ENCODE measurements at regions of chr4 and their contacts with region 1.

Region 1: DNA sequence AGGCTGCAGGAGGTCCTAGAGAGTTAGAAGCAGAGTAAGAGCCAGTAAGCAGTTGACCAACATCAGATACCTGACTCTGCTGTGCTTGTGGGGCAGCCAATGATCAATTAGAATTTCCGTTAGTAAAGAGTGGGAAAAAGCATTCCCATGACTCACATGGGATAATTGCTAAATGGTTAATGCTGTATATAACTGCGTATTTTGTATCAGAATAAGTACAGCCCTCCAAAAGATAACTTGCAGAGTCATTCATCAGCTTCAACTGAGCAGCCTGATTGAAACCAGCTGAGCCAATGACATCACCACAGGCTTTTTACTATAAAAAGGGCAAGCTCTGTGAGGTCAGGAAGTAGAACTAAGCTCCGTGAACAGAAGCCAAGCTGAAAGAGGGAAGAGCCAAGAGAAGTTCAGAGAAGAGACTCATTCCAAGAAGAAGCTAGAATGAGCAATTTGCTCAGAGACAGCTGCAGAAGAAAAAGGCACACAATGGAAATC is 67.9 kb downstream of the PPP3CA start:
- DNase-seq: no peak
- CTCF ChIP-seq: no peak

Region 2: DNA sequence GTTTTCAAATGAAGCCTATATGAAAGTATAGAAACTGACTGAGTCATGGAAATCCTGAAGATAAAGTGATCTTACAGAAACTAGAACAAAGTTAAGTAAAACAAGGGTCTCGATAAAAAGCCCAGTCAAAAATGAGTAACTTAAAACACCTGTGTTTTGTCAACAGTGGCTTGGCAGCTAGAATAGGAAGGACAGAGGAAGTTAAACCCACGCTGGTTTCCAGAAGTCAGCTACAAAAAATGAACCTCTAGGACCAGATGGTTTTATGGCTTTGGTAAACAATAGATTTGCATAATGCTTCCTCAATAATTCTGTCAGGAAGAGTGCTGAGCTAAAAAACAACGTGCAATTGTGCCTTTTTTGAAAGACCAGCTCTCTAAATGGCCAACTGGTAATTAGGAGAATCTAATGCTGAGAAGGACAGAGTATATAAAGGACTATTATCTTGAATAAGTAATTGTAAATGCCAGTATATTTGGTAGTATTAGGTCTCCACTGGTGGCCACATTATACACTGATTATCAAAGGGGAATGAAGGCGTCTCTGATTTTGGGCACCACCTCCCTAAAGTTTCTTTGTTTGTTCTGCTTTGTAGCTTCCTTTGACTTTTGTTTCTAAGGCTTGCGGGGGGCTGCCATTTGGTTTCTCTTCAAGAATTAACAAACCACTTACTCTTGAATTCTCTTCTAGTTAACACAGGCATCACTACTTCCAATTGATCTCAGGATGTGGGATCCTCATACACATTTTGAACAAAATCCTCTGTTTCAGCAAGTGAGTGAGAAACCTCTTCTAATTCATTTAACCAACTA is 140.1 kb after region 1 on chr4:
- in situ Hi-C with region 1: loop called (anchors 10 kb)
- DNase-seq: peak; percentile 31
- CTCF ChIP-seq: no peak

Region 3: DNA sequence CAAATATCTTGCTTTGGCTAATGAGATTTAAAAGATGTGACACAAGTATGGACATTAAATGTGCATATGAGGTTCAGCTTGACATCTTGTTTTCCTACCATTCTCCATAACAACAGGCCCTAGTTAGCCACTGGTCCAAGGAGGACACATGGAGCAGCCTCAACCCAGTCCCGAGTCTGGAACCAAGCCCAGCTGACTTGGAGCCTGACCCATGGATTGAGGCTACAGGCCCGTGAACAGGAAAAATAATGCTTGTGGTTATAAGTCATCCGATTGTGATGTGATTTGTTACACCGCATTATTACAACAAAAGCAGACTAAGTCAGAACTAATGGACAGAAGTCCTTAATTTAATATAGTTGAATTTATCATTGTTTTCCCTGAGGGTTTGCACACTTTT is 387.9 kb after region 1 on chr4:
- in situ Hi-C with region 1: no loop called
- DNase-seq: no peak
- CTCF ChIP-seq: no peak